ENCODE measurements at regions of chr15 and their contacts with region 1.

Region 1: GRCh38 chr15:41827880-41828806 is at the start of gene JMJD7:
- DNase-seq: peak; percentile 88 to 92 (median 89)
- H3K4me3 ChIP-seq: peak within 1 kb of the TSS; percentile 94 to 95
- H3K4me3 Mint-ChIP-seq: peak within 1 kb of the TSS; percentile 91 to 99 (median 94)
- H3K27ac ChIP-seq: peak within 1 kb of the TSS; percentile 74
- H3K27ac Mint-ChIP-seq: peak within 1 kb of the TSS; percentile 83 to 98 (median 95)
- H3K4me1 ChIP-seq: peaks cover 48% of the 10 kb centered on the region
- H3K4me1 Mint-ChIP-seq: peaks cover 30 to 54% (median 43%) of the 10 kb centered on the region in 4 donors
- H3K27me3 ChIP-seq: no peaks in the 10 kb centered on the region
- H3K27me3 Mint-ChIP-seq: no peaks in the 10 kb centered on the region
- total RNA-seq, gene JMJD7: 75.0 to 78.5 TPM

Region 2: GRCh38 chr15:41894791-41895463 is 66.8 kb after region 1 on chr15:
- CTCF ChIA-PET with region 1: interaction called, 4 read pairs
- POLR2A ChIA-PET with region 1: interaction called, 25 read pairs
- intact Hi-C with region 1: no loop called
- DNase-seq: peak; percentile 86 to 95 (median 87)
- H3K4me3 ChIP-seq: peak overlapping the region; percentile 12 to 29
- H3K4me3 Mint-ChIP-seq: peak overlapping the region; percentile 69 to 91 (median 80)
- H3K27ac ChIP-seq: peak overlapping the region; percentile 80
- H3K27ac Mint-ChIP-seq: peak overlapping the region; percentile 97 to 99 (median 99)
- H3K4me1 ChIP-seq: peaks cover 38% of the 10 kb centered on the region
- H3K4me1 Mint-ChIP-seq: peaks cover 14 to 66% (median 36%) of the 10 kb centered on the region in 4 donors
- H3K27me3 ChIP-seq: no peaks in the 10 kb centered on the region
- H3K27me3 Mint-ChIP-seq: no peaks in the 10 kb centered on the region